ENCODE measurements at regions of chr6 and their contacts with region 1.

Region 1: GRCh38 chr6:165439928-165440554 is 130.6 kb upstream of the C6orf118 start:
- DNase-seq: peak; percentile 21

Region 2: GRCh38 chr6:165587206-165587605 is 147.2 kb after region 1 on chr6:
- CTCF ChIA-PET with region 1: no interaction called
- POLR2A ChIA-PET with region 1: no interaction called
- DNase-seq: no peak

Region 3: GRCh38 chr6:165850434-165851019 is 410.5 kb after region 1 on chr6:
- CTCF ChIA-PET with region 1: interaction called, 14 read pairs
- POLR2A ChIA-PET with region 1: interaction called, 3 read pairs
- DNase-seq: peak; percentile 77

Measured in HEK293T (cell line).